ENCODE measurements at regions of chr15 and their contacts with region 1.

Region 1: GRCh38 chr15:37059086-37059485 is 41.3 kb downstream of the MEIS2 start:
- DNase-seq: no peak
- ATAC-seq: no peak
- H3K4me3 ChIP-seq: no peak overlapping the region
- H3K27ac ChIP-seq: no peak overlapping the region
- H3K4me1 ChIP-seq: no peaks in the 10 kb centered on the region
- H3K27me3 ChIP-seq: no peaks in the 10 kb centered on the region
- CTCF ChIP-seq: no peak
- EP300 ChIP-seq: no peak
- POLR2A ChIP-seq: no peak
- RAD21 ChIP-seq: no peak

Region 2: GRCh38 chr15:36996538-36997181 is 62.4 kb before region 1 on chr15:
- CTCF ChIA-PET with region 1: no interaction called
- POLR2A ChIA-PET with region 1: no interaction called
- RAD21 ChIA-PET with region 1: no interaction called
- SMC1A ChIA-PET with region 1: no interaction called
- in situ Hi-C with region 1: no loop called
- intact Hi-C with region 1: loop called (anchors 10 kb)
- DNase-seq: no peak
- ATAC-seq: no peak
- H3K4me3 ChIP-seq: no peak overlapping the region
- H3K27ac ChIP-seq: no peak overlapping the region
- H3K4me1 ChIP-seq: no peaks in the 10 kb centered on the region
- H3K27me3 ChIP-seq: no peaks in the 10 kb centered on the region
- CTCF ChIP-seq: no peak
- EP300 ChIP-seq: no peak
- POLR2A ChIP-seq: no peak
- RAD21 ChIP-seq: no peak